ENCODE measurements at regions of chr4 and their contacts with region 1.

Region 1: GRCh38 chr4:10517671-10518070 is 60.4 kb upstream of the ZNF518B start:
- DNase-seq: no peak
- ATAC-seq: no peak
- H3K4me3 ChIP-seq: no peak overlapping the region
- H3K27ac ChIP-seq: no peak overlapping the region
- H3K4me1 ChIP-seq: no peaks in the 10 kb centered on the region
- H3K27me3 ChIP-seq: no peaks in the 10 kb centered on the region
- CTCF ChIP-seq: no peak
- POLR2A ChIP-seq: no peak
- RAD21 ChIP-seq: no peak

Region 2: DNA sequence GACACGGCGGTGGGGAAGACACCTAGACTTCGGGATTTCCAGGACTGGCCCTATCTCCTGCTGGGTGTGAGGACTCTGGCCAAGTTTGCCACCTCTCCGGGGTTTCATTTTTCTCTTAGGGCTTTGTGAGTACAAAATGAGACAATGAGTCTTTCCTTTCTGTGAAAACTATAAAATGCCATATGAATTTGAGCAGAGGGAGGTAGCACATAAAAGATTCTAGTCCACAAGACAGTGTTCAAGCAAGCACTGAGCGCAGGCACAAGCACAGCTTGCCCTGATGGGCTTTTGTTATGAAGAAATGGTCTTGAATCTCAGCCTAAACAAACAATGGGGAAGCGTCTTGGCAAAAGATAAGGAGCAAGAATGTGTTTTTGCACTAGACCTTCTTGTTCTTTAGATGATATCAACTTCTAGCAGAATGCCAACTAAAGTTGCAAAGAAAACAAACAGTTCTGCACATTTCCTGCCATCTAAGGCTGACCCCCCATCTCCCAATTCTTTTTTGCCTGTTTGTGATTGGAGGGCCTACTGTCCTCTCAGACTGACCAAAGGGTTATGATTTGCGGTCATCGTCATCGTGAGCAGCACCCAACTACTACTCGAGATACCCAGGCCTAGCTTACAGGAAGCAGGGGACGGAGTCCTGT is 12.6 kb after region 1 on chr4:
- CTCF ChIA-PET with region 1: no interaction called
- POLR2A ChIA-PET with region 1: no interaction called
- dilution Hi-C with region 1: no loop called
- in situ Hi-C with region 1: no loop called
- intact Hi-C with region 1: loop called (anchors 1 kb)
- DNase-seq: no peak
- ATAC-seq: no peak
- H3K4me3 ChIP-seq: no peak overlapping the region
- H3K27ac ChIP-seq: no peak overlapping the region
- H3K4me1 ChIP-seq: no peaks in the 10 kb centered on the region
- H3K27me3 ChIP-seq: 0 out of 2 replicates have a peak, but pooled peaks cover 1% of the 10 kb centered on the region
- CTCF ChIP-seq: no peak
- POLR2A ChIP-seq: no peak
- RAD21 ChIP-seq: no peak